GM23248 (cell line): ENCODE measurements at regions of chrX and their contacts with region 1.

Region 1: DNA sequence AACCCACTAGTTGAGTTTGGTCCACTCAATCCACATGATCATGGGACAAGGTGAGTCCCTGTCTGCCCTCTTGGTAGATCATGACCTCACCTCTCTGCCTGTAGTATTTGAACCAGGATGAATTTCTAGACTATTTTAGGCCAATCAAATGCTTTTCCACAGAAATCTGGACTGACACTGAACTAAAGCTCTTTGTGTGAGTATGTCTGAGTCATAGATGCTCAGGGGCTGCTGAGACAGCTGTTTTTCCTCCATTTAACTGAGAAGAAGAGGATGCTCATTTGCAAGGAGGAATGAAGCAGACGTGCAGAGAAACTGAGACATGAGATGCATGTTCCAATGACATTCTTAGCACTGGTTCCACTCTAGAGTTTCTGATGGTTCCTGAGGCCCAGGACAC is 77.3 kb upstream of the TMEM47 start:
- DNase-seq: peak; percentile 30
- H3K4me3 ChIP-seq: no peak overlapping the region
- H3K27ac ChIP-seq: no peak overlapping the region
- H3K4me1 ChIP-seq: no peaks in the 10 kb centered on the region
- H3K27me3 ChIP-seq: no peaks in the 10 kb centered on the region

Region 2: DNA sequence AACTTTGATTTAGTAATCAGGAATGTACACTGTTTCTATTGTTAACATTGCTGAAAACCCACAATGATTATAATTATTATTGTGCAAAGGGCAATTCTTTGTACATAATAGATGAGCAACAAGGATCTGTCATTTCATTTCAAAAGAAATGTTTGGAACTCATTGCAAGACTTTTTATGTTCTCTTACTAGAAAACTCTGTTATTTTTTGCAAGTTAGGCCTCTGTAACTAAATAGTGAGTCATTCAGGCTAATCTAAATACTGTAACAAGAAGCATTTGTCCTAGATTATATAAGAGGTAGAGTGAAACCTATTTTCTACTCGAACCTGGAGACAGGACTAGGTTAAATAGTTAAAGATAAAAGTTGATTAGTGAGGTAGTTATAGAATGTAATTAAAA is 115.0 kb after region 1 on chrX:
- in situ Hi-C with region 1: loop called (anchors 25 kb)
- DNase-seq: peak; percentile 67
- H3K4me3 ChIP-seq: peak overlapping the region; percentile 47
- H3K27ac ChIP-seq: peak overlapping the region; percentile 57
- H3K4me1 ChIP-seq: peaks cover 24% of the 10 kb centered on the region
- H3K27me3 ChIP-seq: no peaks in the 10 kb centered on the region